ENCODE measurements at regions of chr9 and their contacts with region 1.

Region 1: DNA sequence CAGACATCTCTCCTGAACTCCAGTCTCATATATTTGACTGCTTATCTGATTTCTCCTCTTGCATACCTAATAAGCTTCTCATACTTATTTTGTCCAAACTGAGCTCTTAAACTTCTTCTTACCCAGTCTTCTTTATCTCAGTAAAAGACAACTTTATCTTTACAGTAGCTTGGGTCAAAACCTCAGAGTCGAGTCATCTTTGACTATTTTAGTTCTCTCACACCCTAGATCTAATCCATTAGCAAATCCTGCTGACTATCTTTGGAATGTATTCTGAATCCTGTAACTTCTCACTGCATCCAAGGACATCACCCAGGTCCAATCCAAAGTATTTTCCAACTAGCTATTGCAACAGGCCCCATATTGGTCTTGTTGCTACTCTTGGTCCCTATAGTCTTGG is 11.8 kb upstream of the JAK2 start:
- H3K4me3 ChIP-seq: no peak overlapping the region
- H3K27ac ChIP-seq: no peak overlapping the region
- H3K4me1 ChIP-seq: no peaks in the 10 kb centered on the region
- CTCF ChIP-seq: no peak

Region 2: GRCh38 chr9:4984621-4985385 is 11.6 kb after region 1 on chr9 and contains the start of gene JAK2:
- CTCF ChIA-PET with region 1: interaction called, 5 read pairs
- POLR2A ChIA-PET with region 1: interaction called, 10 read pairs
- H3K4me3 ChIP-seq: peak within 1 kb of the TSS; percentile 53
- H3K27ac ChIP-seq: peak within 1 kb of the TSS; percentile 81
- H3K4me1 ChIP-seq: no peaks in the 10 kb centered on the region
- CTCF ChIP-seq: peak; percentile 89

Region 3: GRCh38 chr9:5002811-5003210 is 29.6 kb after region 1 on chr9:
- CTCF ChIA-PET with region 1: no interaction called
- POLR2A ChIA-PET with region 1: no interaction called
- H3K4me3 ChIP-seq: no peak overlapping the region
- H3K27ac ChIP-seq: no peak overlapping the region
- H3K4me1 ChIP-seq: no peaks in the 10 kb centered on the region
- CTCF ChIP-seq: no peak

Region 4: DNA sequence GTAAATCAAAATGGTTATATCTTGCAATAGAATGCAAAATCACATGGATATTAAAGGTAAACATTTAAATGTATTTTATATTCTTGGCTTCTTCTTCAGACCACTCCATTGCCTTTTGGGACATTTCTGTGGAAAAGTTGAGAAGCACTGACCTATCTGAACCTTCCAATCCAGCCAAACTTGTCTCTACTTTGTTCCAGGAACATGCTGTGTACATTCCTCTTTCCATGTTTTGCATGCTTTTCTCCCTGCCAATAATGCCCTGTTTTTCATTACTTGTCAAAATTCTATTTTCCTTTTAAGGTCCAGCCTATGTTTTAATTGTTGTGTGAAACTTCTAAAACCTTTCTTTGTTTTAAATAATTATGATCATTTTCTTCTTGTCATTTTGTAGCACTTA is 40.1 kb after region 1 on chr9:
- CTCF ChIA-PET with region 1: no interaction called
- POLR2A ChIA-PET with region 1: no interaction called
- H3K4me3 ChIP-seq: no peak overlapping the region
- H3K27ac ChIP-seq: no peak overlapping the region
- H3K4me1 ChIP-seq: no peaks in the 10 kb centered on the region
- CTCF ChIP-seq: no peak